T-cell (primary cell): ENCODE measurements at regions of chr16 and their contacts with region 1.

Region 1: DNA sequence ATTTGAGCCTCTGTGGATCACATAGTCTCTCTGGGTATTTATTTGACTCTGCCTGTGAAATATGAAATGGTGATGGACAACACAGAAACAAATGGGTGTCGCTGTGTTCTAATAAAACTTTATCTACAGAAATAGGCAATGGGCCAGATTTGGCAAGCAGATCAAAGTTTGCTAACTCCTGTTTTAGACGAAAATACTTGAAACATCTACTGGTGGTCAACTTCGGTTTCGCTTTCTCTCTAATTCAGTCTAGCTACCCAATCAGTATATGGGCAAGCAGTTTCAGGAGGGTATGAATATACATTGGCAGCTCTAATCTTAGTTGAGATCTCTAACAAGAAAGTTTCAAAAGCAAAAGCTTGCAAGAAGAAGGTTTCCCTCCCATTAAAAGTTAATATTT is 60.1 kb upstream of the DYNLRB2 start:
- DNase-seq: no peak
- ATAC-seq: no peak
- H3K4me3 ChIP-seq: no peak overlapping the region
- H3K4me3 Mint-ChIP-seq: no peak overlapping the region
- H3K27ac ChIP-seq: no peak overlapping the region
- H3K27ac Mint-ChIP-seq: no peak overlapping the region
- H3K4me1 ChIP-seq: no peaks in the 10 kb centered on the region
- H3K4me1 Mint-ChIP-seq: no peaks in the 10 kb centered on the region
- H3K27me3 ChIP-seq: peaks cover 0 to 5% of the 10 kb centered on the region in 2 experiments
- H3K27me3 Mint-ChIP-seq: peaks cover 19 to 22% of the 10 kb centered on the region in 2 donors

Region 2: DNA sequence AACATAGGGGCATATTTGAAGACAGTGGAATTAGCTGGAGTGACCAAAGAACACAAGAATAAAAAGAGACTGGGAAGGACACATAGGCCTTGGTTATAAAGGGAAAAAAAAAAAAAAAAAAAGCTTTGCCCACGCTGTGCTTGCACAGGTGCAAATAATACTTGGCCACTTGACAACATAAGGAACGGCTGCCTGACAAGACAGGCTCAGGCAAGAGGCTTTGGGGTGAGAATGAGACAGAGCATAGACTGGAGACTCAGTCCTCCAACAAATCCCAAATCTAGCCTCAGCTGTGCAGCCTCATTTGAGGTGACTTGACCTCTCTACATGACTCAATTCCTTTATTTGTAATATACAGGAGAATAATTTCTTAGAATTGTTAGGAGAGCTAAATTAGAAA is 272.6 kb before region 1 on chr16:
- CTCF ChIA-PET with region 1: interaction called in 1 of 2 experiments, 11 read pairs
- POLR2A ChIA-PET with region 1: no interaction called
- DNase-seq: no peak
- ATAC-seq: no peak
- H3K4me3 ChIP-seq: no peak overlapping the region
- H3K4me3 Mint-ChIP-seq: no peak overlapping the region
- H3K27ac ChIP-seq: no peak overlapping the region
- H3K27ac Mint-ChIP-seq: no peak overlapping the region
- H3K4me1 ChIP-seq: no peaks in the 10 kb centered on the region
- H3K4me1 Mint-ChIP-seq: no peaks in the 10 kb centered on the region
- H3K27me3 ChIP-seq: no peaks in the 10 kb centered on the region
- H3K27me3 Mint-ChIP-seq: peaks cover 6 to 14% of the 10 kb centered on the region in 2 donors

Region 3: DNA sequence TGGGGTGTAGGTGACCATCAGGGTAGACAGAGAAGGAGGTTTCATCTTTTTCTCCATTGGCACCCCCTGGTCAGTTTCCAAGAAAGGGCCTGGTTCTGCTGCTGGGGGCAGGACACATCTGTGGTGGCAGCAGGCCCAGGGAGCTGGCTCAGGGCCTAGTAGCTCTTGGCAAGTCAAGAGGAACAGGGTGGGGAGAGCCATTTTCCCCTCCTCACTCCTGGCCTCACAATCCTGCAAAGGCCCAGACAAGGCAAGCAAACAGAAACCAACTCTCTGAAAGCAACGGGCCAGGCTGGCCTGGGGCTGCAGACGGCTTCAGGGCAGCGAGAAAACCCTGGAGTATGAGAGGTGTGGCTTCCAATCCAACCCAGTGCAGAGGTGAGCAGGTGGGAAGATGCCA is 132.8 kb before region 1 on chr16:
- CTCF ChIA-PET with region 1: no interaction called
- POLR2A ChIA-PET with region 1: no interaction called
- DNase-seq: no peak
- ATAC-seq: no peak
- H3K4me3 ChIP-seq: no peak overlapping the region
- H3K4me3 Mint-ChIP-seq: no peak overlapping the region
- H3K27ac ChIP-seq: no peak overlapping the region
- H3K27ac Mint-ChIP-seq: no peak overlapping the region
- H3K4me1 ChIP-seq: no peaks in the 10 kb centered on the region
- H3K4me1 Mint-ChIP-seq: no peaks in the 10 kb centered on the region
- H3K27me3 ChIP-seq: no peaks in the 10 kb centered on the region
- H3K27me3 Mint-ChIP-seq: peaks cover 2 to 4% of the 10 kb centered on the region in 2 donors

Region 4: DNA sequence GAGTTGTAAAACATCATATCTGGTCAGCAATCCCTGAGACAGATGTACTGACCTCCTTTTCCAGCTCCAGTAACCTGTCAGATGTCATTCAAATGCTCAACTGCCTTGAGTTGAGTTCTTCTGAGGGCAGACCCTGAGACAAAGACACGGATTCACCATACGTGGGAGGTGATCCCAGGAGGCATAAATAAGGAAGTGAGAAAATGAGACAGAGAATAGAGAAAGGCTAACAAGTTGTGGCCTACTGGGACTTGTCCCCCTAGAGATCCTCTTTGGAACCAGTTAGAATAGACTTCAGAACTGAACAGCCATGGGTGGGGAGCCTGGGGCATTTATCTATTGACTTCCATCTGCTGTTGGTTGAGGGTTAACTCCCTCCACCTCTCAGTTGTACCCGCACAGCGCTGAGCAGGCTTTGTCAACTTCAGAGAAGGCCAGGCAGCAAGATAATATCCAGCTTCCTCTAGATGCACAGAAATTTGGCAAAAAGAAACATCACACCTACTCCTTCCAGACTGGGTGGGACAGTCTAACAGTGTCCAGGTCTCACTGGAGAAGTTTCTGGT is 62.9 kb before region 1 on chr16:
- CTCF ChIA-PET with region 1: no interaction called
- POLR2A ChIA-PET with region 1: no interaction called
- DNase-seq: no peak
- ATAC-seq: no peak
- H3K4me3 ChIP-seq: no peak overlapping the region
- H3K4me3 Mint-ChIP-seq: no peak overlapping the region
- H3K27ac ChIP-seq: no peak overlapping the region
- H3K27ac Mint-ChIP-seq: no peak overlapping the region
- H3K4me1 ChIP-seq: no peaks in the 10 kb centered on the region
- H3K4me1 Mint-ChIP-seq: no peaks in the 10 kb centered on the region
- H3K27me3 ChIP-seq: peaks cover 0 to 3% of the 10 kb centered on the region in 2 experiments
- H3K27me3 Mint-ChIP-seq: peaks cover 19 to 31% of the 10 kb centered on the region in 2 donors